Naive thymus-derived CD8-positive, alpha-beta T cell (primary cell): ENCODE measurements at regions of chr17 and their contacts with region 1.

Region 1: DNA sequence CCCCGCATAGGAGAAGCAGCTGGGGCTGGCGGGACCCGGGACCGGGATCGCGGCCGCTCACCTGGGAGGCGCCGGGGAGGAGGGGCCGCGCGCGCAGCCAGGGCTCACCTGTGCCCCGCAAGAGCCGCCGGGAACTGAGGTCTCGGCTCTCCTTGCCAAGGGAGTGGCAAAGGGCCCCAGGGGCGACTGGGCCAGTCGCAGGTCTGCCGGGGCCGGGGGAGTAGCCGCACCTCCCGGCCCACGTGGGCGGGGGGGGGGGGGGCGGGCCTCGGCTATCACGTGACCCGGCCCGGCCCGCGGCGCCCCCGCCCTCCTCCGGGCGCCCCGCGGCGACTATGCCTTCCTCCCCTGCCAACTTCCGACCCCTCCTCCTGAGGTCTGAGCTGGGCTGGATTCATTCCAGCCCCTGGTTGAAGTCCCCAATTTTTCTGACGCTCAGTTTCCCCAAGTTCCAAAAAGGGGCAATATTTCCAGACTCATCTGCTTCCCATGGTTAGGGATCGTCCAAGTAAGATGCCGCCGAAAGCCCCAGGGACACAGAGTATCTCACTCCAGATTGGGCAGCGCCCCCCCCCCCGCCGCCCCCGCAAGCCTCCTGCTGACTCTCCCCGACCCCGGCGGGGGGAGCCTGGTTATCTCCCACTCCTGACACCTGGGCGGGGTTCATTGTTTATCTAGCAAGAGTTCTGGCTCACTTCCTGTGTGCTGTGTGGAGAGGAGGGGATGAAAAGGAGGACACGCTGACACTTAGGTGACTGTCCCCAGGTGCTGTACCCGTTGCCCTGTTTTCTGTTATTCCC is at the start of gene TMC6:
- DNase-seq: peak; percentile 70 to 94 (median 82)
- ATAC-seq: peak; percentile 16 to 50
- H3K4me3 Mint-ChIP-seq: peak within 1 kb of the TSS; percentile 96 to 100 (median 98)
- H3K27ac Mint-ChIP-seq: peak within 1 kb of the TSS; percentile 90 to 100 (median 97)
- H3K4me1 Mint-ChIP-seq: peaks cover 28 to 65% (median 57%) of the 10 kb centered on the region in 4 donors
- H3K27me3 Mint-ChIP-seq: no peaks in the 10 kb centered on the region
- polyA plus RNA-seq, gene TMC6: 186 to 253 (median 209) TPM

Region 2: GRCh38 chr17:77429919-77430752 is 698.6 kb before region 1 on chr17:
- POLR2A ChIA-PET with region 1: interaction called, 16 read pairs
- DNase-seq: peak; percentile 71 to 92 (median 82)
- ATAC-seq: peak; percentile 18 to 37
- H3K4me3 Mint-ChIP-seq: peak overlapping the region in 9 of 10 donors; percentile 16 to 99 (median 86)
- H3K27ac Mint-ChIP-seq: peak overlapping the region; percentile 80 to 100 (median 97)
- H3K4me1 Mint-ChIP-seq: peaks cover 45 to 94% (median 87%) of the 10 kb centered on the region in 4 donors
- H3K27me3 Mint-ChIP-seq: no peaks in the 10 kb centered on the region

Region 3: DNA sequence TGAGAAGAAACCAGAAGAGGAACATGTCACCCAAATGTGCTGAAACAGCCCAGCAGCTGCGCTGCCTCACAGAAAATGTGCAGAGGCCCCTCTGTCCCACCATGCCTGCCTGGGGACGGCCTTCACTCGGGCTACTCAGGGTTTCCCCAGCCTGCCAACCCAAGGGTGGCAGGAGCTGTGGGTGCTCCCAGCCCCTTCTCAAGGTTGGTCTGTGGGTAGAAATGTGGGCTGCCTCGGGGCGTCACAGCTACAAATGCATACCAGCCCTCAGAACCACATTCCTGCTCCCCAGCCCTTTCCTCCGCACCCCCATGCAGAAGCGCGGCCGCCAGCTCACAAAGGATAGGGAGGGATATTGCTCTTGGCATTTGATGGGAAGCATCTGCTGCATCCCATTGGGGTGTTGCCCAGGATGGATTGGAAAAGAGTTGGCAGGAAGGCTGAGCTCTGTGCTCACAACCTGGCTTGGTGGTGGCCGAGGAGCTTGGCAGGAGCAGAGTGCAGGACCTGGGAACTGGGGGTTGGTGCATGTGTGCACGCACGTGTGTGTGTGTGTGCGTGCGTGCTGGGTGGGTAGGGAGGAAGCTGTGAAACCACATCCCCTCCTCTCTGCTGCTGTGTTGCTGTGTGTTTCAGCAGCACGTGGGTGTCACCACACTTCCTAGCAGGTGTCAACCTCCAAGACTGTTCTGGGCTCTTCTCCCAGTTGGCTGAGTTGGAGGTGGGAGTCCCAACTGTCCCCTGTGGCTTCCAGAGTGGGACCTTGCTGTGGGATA is 683.6 kb before region 1 on chr17:
- POLR2A ChIA-PET with region 1: interaction called, 15 read pairs
- DNase-seq: peak; percentile 67 to 98 (median 88)
- ATAC-seq: peak; percentile 60 to 77
- H3K4me3 Mint-ChIP-seq: peak overlapping the region; percentile 72 to 99 (median 86)
- H3K27ac Mint-ChIP-seq: peak overlapping the region; percentile 93 to 100 (median 99)
- H3K4me1 Mint-ChIP-seq: peaks cover 59 to 98% (median 96%) of the 10 kb centered on the region in 4 donors
- H3K27me3 Mint-ChIP-seq: peaks cover 0 to 4% (median 0%) of the 10 kb centered on the region in 5 donors

Region 4: DNA sequence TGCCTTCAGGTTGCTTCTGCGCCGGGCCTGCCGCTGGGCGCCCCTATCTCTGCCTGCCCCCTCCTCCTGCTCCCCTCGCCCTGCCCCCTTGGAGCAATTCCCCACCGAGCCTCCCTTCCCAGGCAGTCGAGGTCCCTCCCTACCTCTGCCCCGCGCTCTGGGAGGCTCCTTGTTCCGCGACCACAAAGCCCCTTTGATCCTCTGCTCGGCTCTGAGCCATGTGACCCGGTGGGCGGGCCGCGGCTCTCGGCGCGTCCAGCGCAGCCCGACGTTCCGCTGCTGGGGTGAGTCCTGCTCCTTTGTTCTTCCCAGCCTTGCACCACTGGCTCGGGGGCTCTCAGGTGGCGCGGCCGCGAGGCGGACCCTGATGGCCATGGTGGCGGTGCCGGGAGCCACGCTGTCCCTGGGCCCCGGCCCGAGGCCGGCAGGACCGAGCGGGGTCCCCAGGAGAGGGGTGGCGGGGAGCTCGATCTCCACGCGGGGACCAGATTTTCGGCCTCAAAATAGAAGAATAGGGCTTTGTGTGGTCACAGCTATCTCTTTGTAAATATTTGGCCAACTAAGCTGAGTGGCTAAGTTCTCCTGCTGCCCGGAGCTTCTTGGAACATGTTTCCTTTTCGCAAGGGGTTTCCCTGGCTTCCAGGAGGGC is 677.4 kb before region 1 on chr17:
- POLR2A ChIA-PET with region 1: interaction called, 12 read pairs
- DNase-seq: peak in 9 of 10 donors; percentile 60 to 81 (median 68)
- ATAC-seq: peak; percentile 50 to 62
- H3K4me3 Mint-ChIP-seq: peak overlapping the region; percentile 91 to 98 (median 96)
- H3K27ac Mint-ChIP-seq: peak overlapping the region; percentile 92 to 99 (median 99)
- H3K4me1 Mint-ChIP-seq: peaks cover 28 to 67% (median 54%) of the 10 kb centered on the region in 4 donors
- H3K27me3 Mint-ChIP-seq: no peaks in the 10 kb centered on the region

Region 5: DNA sequence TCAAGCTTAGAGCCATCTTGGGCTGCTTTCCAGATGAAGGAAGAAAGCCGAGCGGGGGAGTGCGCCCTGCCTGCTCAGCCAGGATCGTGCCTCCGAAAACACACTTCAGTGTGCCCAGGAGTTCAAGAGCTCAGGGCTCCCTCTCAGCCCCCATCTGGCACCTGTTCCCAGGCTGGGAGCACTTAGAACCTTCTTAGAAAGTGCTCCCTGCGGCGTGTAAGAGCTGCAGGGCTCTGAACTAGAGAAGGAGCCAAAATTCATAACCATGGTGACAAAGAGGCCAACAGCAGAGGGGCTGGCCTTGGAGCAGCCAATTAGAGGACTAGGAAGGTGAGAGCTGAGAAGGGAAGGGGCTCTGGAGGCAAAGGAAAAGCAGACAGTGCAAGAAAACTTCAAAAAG is 229.3 kb before region 1 on chr17:
- POLR2A ChIA-PET with region 1: no interaction called
- DNase-seq: no peak
- ATAC-seq: no peak
- H3K4me3 Mint-ChIP-seq: no peak overlapping the region
- H3K27ac Mint-ChIP-seq: peak overlapping the region in 2 of 10 donors; percentile 37 to 68
- H3K4me1 Mint-ChIP-seq: peaks cover 3 to 27% (median 16%) of the 10 kb centered on the region in 4 donors
- H3K27me3 Mint-ChIP-seq: peaks cover 0 to 1% (median 0%) of the 10 kb centered on the region in 5 donors

Region 6: DNA sequence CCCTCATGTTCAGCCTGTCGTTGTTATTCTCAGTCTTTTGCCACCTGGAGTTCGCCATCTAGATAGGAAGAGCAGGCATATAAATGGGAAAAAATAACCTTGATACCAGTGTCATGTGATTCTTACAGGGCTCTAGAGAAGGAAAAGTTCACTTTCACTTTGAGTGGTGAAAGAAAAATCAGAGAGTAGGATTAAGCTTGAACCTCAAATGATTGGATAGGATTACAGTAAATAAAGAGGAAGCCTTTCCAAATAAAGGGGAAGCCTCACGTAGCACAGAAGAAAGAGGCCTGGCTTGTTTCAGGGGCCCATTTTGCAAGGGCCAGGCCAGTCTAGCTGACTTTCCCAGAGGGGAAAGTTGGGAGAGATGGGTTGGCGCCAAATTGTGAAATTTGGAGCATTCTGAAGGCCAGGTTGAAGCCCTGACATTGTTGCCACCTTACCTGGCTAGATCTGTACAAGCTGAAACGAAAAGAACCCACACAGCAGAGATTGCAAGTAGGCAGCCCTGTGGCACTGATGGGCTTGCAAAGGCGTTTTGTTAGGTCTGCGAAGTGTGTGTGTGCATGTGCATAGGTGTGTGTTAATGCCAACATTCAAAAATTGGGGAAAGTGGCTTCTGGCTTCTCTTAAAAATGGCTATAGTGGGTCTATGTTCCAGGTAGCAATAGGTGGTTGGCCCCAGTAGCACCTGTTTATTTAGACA is 39.0 kb before region 1 on chr17:
- POLR2A ChIA-PET with region 1: no interaction called
- DNase-seq: no peak
- ATAC-seq: no peak
- H3K4me3 Mint-ChIP-seq: no peak overlapping the region
- H3K27ac Mint-ChIP-seq: peak overlapping the region in 7 of 10 donors; percentile 27 to 81 (median 44)
- H3K4me1 Mint-ChIP-seq: peaks cover 0 to 3% (median 2%) of the 10 kb centered on the region in 4 donors
- H3K27me3 Mint-ChIP-seq: no peaks in the 10 kb centered on the region

Region 7: DNA sequence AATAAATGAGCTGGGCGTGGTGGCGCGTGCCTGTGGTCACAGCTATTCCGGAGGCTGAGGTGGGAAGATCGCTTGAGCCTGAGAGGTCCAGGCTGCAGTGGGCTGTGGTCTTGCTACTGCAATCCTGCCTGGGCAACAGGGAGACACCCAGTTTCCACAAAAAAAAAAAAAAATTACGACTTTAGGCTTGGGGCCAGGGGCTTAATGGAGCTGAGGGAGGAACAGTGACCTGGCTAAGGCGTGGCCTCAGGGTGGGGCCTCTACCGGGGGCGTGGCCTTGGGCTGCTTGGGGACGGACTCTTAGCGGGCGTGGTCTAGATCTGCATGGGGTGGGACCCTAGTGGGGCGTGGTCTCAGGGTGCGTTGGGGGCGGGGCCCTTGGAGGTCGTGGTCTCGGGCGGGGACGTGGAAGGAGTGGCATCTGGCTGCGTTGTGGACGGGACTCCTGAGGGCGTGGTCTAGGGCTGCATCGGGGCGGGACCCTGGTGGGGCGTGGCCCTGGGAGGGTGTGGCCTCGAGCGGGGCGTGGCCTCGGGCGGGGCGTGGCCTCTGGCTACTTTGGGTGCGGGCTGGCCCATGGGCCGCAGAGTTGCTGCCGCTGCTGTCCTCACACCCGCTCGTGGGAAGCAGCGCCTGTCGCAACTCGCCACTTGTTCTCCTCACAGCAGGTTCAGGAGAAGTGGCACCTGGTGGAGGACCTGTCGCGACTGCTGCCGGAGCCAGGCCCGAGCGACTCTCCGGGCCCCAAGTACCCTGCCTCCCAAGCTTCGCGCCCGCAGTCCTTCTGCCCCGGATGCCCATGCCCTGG is 11.6 kb after region 1 on chr17:
- POLR2A ChIA-PET with region 1: interaction called, 1,112 read pairs
- DNase-seq: peak; percentile 83 to 97 (median 94)
- ATAC-seq: peak; percentile 81 to 89
- H3K4me3 Mint-ChIP-seq: peak overlapping the region; percentile 47 to 78 (median 68)
- H3K27ac Mint-ChIP-seq: peak overlapping the region; percentile 79 to 97 (median 93)
- H3K4me1 Mint-ChIP-seq: peaks cover 41 to 88% (median 81%) of the 10 kb centered on the region in 4 donors
- H3K27me3 Mint-ChIP-seq: no peaks in the 10 kb centered on the region

Region 8: DNA sequence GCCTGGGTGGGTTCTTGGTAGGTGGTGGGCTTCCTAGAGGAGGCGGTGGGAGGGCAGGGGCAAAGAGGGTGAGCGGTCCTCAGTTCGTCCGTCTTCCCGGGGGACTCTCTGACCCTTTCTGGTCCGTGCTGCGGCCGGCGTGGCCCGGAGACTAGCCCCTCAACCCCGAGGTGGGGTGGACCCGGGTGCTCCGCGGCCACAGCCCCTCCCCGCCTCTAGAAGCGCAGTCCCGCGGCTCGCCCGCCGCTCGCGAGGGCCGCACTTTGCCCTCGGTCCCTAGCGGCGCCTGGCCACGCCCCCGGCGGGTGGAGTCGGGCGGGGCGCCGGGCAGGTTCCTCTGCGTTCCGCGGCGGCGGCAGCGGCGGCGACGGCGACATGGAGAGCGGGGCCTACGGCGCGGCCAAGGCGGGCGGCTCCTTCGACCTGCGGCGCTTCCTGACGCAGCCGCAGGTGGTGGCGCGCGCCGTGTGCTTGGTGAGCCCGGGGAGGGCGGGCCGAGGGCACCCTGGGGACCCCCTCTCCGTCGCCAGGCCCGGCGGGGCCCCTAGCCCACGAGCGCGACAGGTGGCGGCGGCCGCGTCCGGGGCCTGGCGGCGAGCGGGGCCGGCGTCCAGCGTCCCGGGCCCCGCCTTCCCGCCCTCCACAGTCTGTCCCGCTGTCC is 39.6 kb after region 1 on chr17 and contains the start of gene SYNGR2:
- POLR2A ChIA-PET with region 1: interaction called, 122 read pairs
- DNase-seq: peak; percentile 75 to 91 (median 84)
- ATAC-seq: peak; percentile 88 to 89
- H3K4me3 Mint-ChIP-seq: peak within 1 kb of the TSS; percentile 61 to 85 (median 72)
- H3K27ac Mint-ChIP-seq: peak within 1 kb of the TSS in 9 of 10 donors; percentile 53 to 93 (median 77)
- H3K4me1 Mint-ChIP-seq: peaks cover 18 to 41% (median 40%) of the 10 kb centered on the region in 4 donors
- H3K27me3 Mint-ChIP-seq: no peaks in the 10 kb centered on the region
- polyA plus RNA-seq, gene SYNGR2: 88.4 to 108 (median 92.1) TPM

Region 9: GRCh38 chr17:78250891-78251794 is 122.4 kb after region 1 on chr17:
- POLR2A ChIA-PET with region 1: interaction called, 21 read pairs
- DNase-seq: peak; percentile 71 to 89 (median 82)
- ATAC-seq: peak; percentile 27 to 34
- H3K4me3 Mint-ChIP-seq: peak overlapping the region; percentile 78 to 95 (median 86)
- H3K27ac Mint-ChIP-seq: peak overlapping the region; percentile 82 to 100 (median 97)
- H3K4me1 Mint-ChIP-seq: peaks cover 16 to 55% (median 49%) of the 10 kb centered on the region in 4 donors
- H3K27me3 Mint-ChIP-seq: no peaks in the 10 kb centered on the region

Region 10: GRCh38 chr17:78598013-78598471 is 469.3 kb after region 1 on chr17:
- POLR2A ChIA-PET with region 1: no interaction called
- DNase-seq: no peak
- ATAC-seq: no peak
- H3K4me3 Mint-ChIP-seq: no peak overlapping the region
- H3K27ac Mint-ChIP-seq: no peak overlapping the region
- H3K4me1 Mint-ChIP-seq: peaks cover 0 to 2% (median 0%) of the 10 kb centered on the region in 4 donors
- H3K27me3 Mint-ChIP-seq: peaks cover 0 to 17% (median 14%) of the 10 kb centered on the region in 5 donors